Gastrocnemius medialis (tissue), 4 donors: ENCODE measurements at regions of chr3 and their contacts with region 1.

Region 1: GRCh38 chr3:45199837-45200648 is 26.0 kb downstream of the TMEM158 start:
- DNase-seq: no peak
- ATAC-seq: peak in 1 of 2 donors; percentile 33
- H3K4me3 ChIP-seq: no peak overlapping the region
- H3K27ac ChIP-seq: no peak overlapping the region
- H3K4me1 ChIP-seq: no peaks in the 10 kb centered on the region
- H3K27me3 ChIP-seq: no peaks in the 10 kb centered on the region
- CTCF ChIP-seq: no peak
- POLR2A ChIP-seq: no peak

Region 2: GRCh38 chr3:45043728-45044299 is 156.2 kb before region 1 on chr3:
- in situ Hi-C with region 1: loop called in 1 of 4 experiments (anchors 5 kb)
- intact Hi-C with region 1: no loop called
- DNase-seq: no peak
- ATAC-seq: no peak
- H3K4me3 ChIP-seq: no peak overlapping the region
- H3K27ac ChIP-seq: no peak overlapping the region
- H3K4me1 ChIP-seq: peaks cover 0 to 18% of the 10 kb centered on the region in 2 donors
- H3K27me3 ChIP-seq: no peaks in the 10 kb centered on the region
- CTCF ChIP-seq: no peak
- POLR2A ChIP-seq: no peak

Region 3: DNA sequence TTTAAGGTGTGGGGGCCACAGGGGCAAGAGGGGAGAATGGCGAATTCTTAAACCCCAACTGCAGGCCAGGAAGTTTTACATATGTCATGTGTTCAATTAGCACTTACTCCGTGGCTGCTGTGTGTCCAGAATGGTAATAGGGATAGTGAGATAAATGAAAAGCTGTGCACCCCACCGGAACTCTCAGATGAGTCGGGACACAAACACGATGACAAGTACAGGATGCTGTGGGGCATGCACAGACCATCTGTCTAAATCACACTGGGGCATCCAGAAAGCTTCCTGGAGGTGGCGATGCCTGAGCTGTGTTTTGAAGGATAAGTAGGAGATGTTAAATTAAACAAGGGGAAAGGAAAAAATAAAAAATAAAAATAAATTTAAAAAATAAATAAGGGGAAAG is 44.3 kb after region 1 on chr3:
- in situ Hi-C with region 1: no loop called
- intact Hi-C with region 1: no loop called
- DNase-seq: no peak
- ATAC-seq: no peak
- H3K4me3 ChIP-seq: no peak overlapping the region
- H3K27ac ChIP-seq: no peak overlapping the region
- H3K4me1 ChIP-seq: no peaks in the 10 kb centered on the region
- H3K27me3 ChIP-seq: peaks cover 0 to 2% (median 0%) of the 10 kb centered on the region in 3 donors
- CTCF ChIP-seq: no peak
- POLR2A ChIP-seq: no peak

Region 4: DNA sequence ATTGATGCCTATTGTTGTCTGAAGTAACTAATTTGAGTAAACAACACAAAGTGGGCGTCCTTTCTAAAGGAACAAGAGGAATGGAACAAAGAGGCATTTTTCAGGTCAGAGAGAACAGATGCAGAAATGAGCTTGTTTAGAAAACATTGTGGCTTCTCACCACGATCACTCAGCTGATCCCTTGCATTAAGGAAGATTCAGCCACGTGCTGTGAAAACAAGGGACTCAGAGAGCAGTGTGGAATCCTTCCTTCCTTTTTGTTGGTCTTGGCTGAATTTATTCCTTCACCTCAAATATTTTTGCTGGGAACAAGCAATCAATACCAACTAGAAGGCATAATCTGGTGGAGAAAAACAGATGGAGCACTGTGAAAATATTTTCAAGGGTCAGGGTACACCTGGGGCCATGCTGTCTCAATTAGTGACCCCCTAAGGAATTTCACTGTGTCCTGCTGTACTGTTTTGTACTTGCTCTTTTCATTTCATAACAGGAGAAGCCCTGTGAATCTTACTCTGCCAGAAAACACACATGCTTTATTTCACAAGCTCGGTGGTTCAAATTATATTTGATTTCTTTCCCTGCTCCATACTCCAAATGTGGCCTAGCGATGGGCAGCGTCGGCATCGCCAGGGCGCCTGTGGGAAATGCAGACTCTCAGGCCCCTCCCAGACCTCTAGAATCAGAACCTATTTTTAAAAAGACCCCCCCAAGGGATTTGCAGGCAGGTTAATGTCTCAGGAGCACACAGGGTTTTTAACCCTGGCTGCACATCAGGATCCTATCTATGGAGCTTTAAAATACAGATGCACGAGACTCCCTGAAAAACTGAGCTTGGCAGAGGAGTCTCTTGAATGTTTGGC is 607.9 kb after region 1 on chr3:
- in situ Hi-C with region 1: no loop called
- intact Hi-C with region 1: no loop called
- DNase-seq: peak in 1 of 2 donors; percentile 22
- ATAC-seq: peak; percentile 96
- H3K4me3 ChIP-seq: no peak overlapping the region
- H3K27ac ChIP-seq: peak overlapping the region; percentile 39 to 77 (median 68)
- H3K4me1 ChIP-seq: peaks cover 6 to 28% of the 10 kb centered on the region in 2 donors
- H3K27me3 ChIP-seq: no peaks in the 10 kb centered on the region
- CTCF ChIP-seq: no peak
- POLR2A ChIP-seq: no peak